Astrocyte of the cerebellum (primary cell): ENCODE measurements at regions of chr10 and their contacts with region 1.

Region 1: GRCh38 chr10:26334932-26335573 is 103.1 kb upstream of the APBB1IP start:
- DNase-seq: peak; percentile 33
- H3K4me3 ChIP-seq: no peak overlapping the region
- CTCF ChIP-seq: peak; percentile 72

Region 2: GRCh38 chr10:26556748-26557640 is 221.9 kb after region 1 on chr10:
- in situ Hi-C with region 1: loop called (anchors 25 kb)
- DNase-seq: peak; percentile 27
- H3K4me3 ChIP-seq: no peak overlapping the region
- CTCF ChIP-seq: peak; percentile 93